PC-9 (cell line): ENCODE measurements at regions of chr15 and their contacts with region 1.

Region 1: DNA sequence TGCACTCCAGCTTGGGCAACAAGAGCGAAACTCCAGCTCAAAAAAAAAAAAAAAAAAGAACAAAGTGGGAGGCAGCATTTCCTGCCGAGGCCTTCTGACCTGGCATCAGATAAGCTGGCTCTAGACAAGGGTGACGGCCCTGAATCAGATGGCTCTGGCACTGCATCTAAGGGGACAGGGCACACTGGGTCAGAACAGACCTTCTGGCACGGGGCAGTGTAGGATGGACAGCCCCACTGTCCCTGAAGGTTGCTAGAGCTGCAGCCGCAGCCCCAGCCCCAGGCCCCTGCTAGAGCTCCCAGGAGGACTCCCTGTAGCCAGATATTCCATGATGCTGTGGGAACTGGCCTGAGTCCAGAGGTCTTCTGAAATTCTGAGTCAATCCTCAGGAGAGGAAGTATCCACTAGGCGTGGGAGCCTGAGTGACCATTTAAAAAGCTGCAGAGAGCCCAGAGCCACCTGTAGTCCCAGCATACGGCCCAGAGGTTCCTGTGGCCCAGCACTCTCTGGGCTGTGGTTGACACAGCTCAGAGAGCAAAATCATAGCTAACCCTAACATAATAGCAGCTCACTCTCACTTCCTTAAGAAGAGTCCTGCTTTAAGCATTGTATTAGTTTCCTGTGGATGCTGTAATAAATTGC is 69.2 kb upstream of the MFGE8 start:
- DNase-seq: peak; percentile 4 to 61
- H3K4me3 ChIP-seq: no peak overlapping the region
- H3K27ac ChIP-seq: peak overlapping the region; percentile 64; the same call in 1 of the 2 replicates
- H3K4me1 ChIP-seq: 0 out of 2 replicates have a peak, but pooled peaks cover 6% of the 10 kb centered on the region
- H3K27me3 ChIP-seq: no peaks in the 10 kb centered on the region
- CTCF ChIP-seq: no peak

Region 2: GRCh38 chr15:88940110-88940675 is 42.2 kb before region 1 on chr15:
- CTCF ChIA-PET with region 1: no interaction called
- POLR2A ChIA-PET with region 1: interaction called, 14 read pairs
- intact Hi-C with region 1: no loop called
- DNase-seq: no peak
- H3K4me3 ChIP-seq: no peak overlapping the region
- H3K27ac ChIP-seq: no peak overlapping the region
- H3K4me1 ChIP-seq: no peaks in the 10 kb centered on the region
- H3K27me3 ChIP-seq: no peaks in the 10 kb centered on the region
- CTCF ChIP-seq: no peak

Region 3: GRCh38 chr15:88954431-88955277 is 27.8 kb before region 1 on chr15:
- CTCF ChIA-PET with region 1: no interaction called
- POLR2A ChIA-PET with region 1: no interaction called
- intact Hi-C with region 1: no loop called
- DNase-seq: no peak
- H3K4me3 ChIP-seq: no peak overlapping the region
- H3K27ac ChIP-seq: no peak overlapping the region
- H3K4me1 ChIP-seq: no peaks in the 10 kb centered on the region
- H3K27me3 ChIP-seq: no peaks in the 10 kb centered on the region; the same call in 1 of the 2 replicates
- CTCF ChIP-seq: no peak

Region 4: GRCh38 chr15:89003865-89004725 is 21.7 kb after region 1 on chr15:
- CTCF ChIA-PET with region 1: no interaction called
- POLR2A ChIA-PET with region 1: no interaction called
- intact Hi-C with region 1: no loop called
- DNase-seq: no peak
- H3K4me3 ChIP-seq: no peak overlapping the region
- H3K27ac ChIP-seq: no peak overlapping the region
- H3K4me1 ChIP-seq: no peaks in the 10 kb centered on the region
- H3K27me3 ChIP-seq: no peaks in the 10 kb centered on the region
- CTCF ChIP-seq: no peak